GM12878 (cell line): ENCODE measurements at regions of chr4 and their contacts with region 1.

Region 1: DNA sequence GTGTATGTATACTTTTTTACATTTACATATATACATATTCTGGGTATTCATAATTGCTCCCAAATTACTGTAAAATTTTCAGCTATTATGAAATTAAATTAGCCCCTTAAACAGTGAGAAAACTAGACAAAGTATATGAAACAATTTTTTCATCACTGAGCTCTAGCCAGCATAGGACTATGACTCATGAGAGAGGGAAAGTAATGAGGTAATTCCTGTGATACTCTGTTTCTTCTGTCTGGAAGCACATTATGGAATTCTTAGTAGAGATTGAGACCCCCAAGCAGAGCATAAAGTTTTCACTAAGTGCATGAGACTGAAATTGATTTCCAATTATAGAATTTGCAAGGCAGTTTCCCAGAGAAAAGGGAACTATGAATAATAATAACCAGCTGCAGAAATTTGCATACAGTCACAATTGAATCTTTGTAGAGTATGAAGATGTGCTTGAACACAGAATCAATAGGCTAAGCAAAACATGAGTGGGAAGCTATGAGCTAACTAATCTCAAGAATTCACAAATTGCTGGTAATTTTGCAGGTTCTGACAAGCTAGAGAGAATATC is 779.3 kb downstream of the ARAP2 start:
- DNase-seq: no peak
- ATAC-seq: no peak; the same call in 2 of the 3 replicates
- H3K4me3 ChIP-seq: no peak overlapping the region
- H3K27ac ChIP-seq: no peak overlapping the region
- H3K4me1 ChIP-seq: no peaks in the 10 kb centered on the region
- H3K27me3 ChIP-seq: no peaks in the 10 kb centered on the region
- CTCF ChIP-seq: no peak
- EP300 ChIP-seq: no peak
- POLR2A ChIP-seq: no peak
- RAD21 ChIP-seq: no peak

Region 2: DNA sequence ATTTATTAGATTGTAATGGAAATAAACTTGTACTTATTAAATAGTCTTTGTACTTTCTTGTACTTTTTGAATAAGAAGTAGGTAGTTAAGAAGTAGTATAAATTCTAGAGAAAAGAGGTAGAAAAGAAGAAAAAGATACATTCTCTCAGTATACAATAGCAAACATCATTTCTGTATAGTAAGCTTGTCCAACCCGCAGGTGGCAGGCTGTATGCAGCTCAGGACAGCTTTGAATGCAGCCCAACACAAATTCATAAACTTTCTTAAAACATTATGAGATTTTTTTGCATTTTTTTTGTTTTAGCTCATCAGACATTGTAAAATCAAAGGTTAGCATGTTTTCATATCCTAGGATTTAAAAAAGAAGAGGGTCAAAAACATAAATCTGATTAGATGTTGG is 1257.9 kb after region 1 on chr4:
- CTCF ChIA-PET with region 1: no interaction called
- POLR2A ChIA-PET with region 1: no interaction called
- RAD21 ChIA-PET with region 1: no interaction called
- SMC1A ChIA-PET with region 1: no interaction called
- in situ Hi-C with region 1: no loop called
- intact Hi-C with region 1: loop called (anchors 5 kb)
- DNase-seq: no peak
- ATAC-seq: peak; percentile 46; the same call in 2 of the 3 replicates
- H3K4me3 ChIP-seq: no peak overlapping the region
- H3K27ac ChIP-seq: no peak overlapping the region
- H3K4me1 ChIP-seq: no peaks in the 10 kb centered on the region
- H3K27me3 ChIP-seq: no peaks in the 10 kb centered on the region
- CTCF ChIP-seq: peak in 1 of 3 experiments; percentile 12; a peak in 1 of 6 replicates
- EP300 ChIP-seq: no peak
- POLR2A ChIP-seq: no peak
- RAD21 ChIP-seq: peak; percentile 46; the same call in 1 of the 2 replicates